ENCODE measurements at regions of chr3 and their contacts with region 1.

Region 1: GRCh38 chr3:50192689-50193141 is 1.3 kb downstream of the GNAT1 start:
- DNase-seq: peak; percentile 74

Region 2: GRCh38 chr3:50121416-50122032 is 71.2 kb before region 1 on chr3:
- CTCF ChIA-PET with region 1: interaction called, 11 read pairs
- POLR2A ChIA-PET with region 1: interaction called, 3 read pairs
- DNase-seq: peak; percentile 88

Region 3: GRCh38 chr3:50174947-50175524 is 17.7 kb before region 1 on chr3:
- CTCF ChIA-PET with region 1: no interaction called
- POLR2A ChIA-PET with region 1: no interaction called
- DNase-seq: no peak

Region 4: GRCh38 chr3:50205414-50206276 is 12.9 kb after region 1 on chr3:
- CTCF ChIA-PET with region 1: interaction called, 16 read pairs
- POLR2A ChIA-PET with region 1: interaction called, 8 read pairs
- DNase-seq: peak; percentile 25

Region 5: GRCh38 chr3:50227390-50228183 is 34.9 kb after region 1 on chr3:
- CTCF ChIA-PET with region 1: interaction called, 35 read pairs
- POLR2A ChIA-PET with region 1: interaction called, 11 read pairs
- DNase-seq: peak; percentile 89

Region 6: GRCh38 chr3:50245831-50246516 is 53.3 kb after region 1 on chr3:
- CTCF ChIA-PET with region 1: interaction called, 22 read pairs
- POLR2A ChIA-PET with region 1: no interaction called
- DNase-seq: peak; percentile 83

Measured in HEK293T (cell line).